PC-9 (cell line): ENCODE measurements at regions of chrX and their contacts with region 1.

Region 1: DNA sequence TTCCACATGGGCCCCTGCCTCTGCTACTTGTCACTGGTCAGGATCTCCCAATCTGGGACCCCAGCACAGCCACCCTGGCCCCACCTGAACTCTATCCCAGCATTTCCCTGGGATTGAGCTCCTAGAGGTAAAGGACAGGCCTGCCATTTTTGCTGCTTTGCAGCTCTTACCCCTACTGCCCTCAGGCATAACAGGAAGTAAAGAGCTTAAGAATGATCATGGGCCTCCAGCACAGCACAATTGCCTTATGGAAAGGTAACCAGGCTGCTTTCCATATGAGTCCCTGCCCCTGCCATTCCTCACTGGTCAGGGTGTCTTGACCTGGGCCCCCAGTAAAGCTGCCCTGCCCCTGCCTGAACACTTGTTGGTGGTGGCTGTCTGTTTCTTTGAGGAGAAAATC is 254.8 kb upstream of the ZCCHC13 start:
- DNase-seq: no peak
- H3K4me3 ChIP-seq: no peak overlapping the region
- H3K27ac ChIP-seq: no peak overlapping the region
- H3K4me1 ChIP-seq: no peaks in the 10 kb centered on the region
- H3K27me3 ChIP-seq: no peaks in the 10 kb centered on the region
- CTCF ChIP-seq: no peak

Region 2: GRCh38 chrX:74232859-74233258 is 183.7 kb after region 1 on chrX:
- CTCF ChIA-PET with region 1: no interaction called
- POLR2A ChIA-PET with region 1: interaction called, 11 read pairs
- intact Hi-C with region 1: no loop called
- DNase-seq: no peak
- H3K4me3 ChIP-seq: no peak overlapping the region
- H3K27ac ChIP-seq: no peak overlapping the region
- H3K4me1 ChIP-seq: no peaks in the 10 kb centered on the region
- H3K27me3 ChIP-seq: no peaks in the 10 kb centered on the region
- CTCF ChIP-seq: 0 out of 2 replicates have a peak, but pooled peaks have one; percentile 10